ENCODE measurements at regions of chr4 and their contacts with region 1.

Region 1: GRCh38 chr4:48033825-48034413 is 17.3 kb downstream of the NIPAL1 start:
- DNase-seq: peak in 34 of 35 experiments; percentile 28 to 74 (median 53)
- ATAC-seq: peak; percentile 75 to 85 (median 82)
- H3K4me3 ChIP-seq: no peak overlapping the region
- H3K4me3 Mint-ChIP-seq: no peak overlapping the region
- H3K27ac ChIP-seq: no peak overlapping the region
- H3K27ac Mint-ChIP-seq: no peak overlapping the region
- H3K4me1 ChIP-seq: peaks cover 0 to 4% of the 10 kb centered on the region in 2 experiments
- H3K4me1 Mint-ChIP-seq: peaks cover 6 to 20% (median 12%) of the 10 kb centered on the region in 3 donors
- H3K27me3 ChIP-seq: no peaks in the 10 kb centered on the region
- H3K27me3 Mint-ChIP-seq: no peaks in the 10 kb centered on the region

Region 2: DNA sequence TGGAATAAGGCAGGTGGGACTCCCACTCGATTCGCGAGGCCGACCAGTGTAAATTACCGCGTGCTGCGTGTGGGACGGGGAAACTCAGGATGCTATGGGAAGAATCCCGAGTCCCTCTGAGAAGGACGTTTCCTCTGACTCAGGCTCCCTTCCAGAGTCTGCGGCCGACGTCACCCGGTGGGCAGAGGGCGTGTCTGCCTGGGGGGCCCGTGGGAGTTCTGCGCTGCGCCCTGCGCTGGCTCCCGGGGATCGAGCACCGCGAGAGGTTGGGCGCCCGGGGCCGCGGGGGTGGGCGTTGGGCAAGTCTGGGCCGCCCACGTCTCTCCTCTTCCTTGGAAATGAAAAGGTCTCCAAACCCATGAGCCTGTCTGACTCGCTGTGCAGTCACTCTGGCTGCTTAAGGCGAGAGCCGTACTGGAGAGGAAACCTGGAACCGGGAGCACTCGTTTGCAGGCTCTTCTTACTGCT is 16.8 kb before region 1 on chr4:
- CTCF ChIA-PET with region 1: interaction called, 8 to 18 read pairs
- POLR2A ChIA-PET with region 1: interaction called, 3 to 4 read pairs
- DNase-seq: peak in 6 of 35 experiments; percentile 2 to 28 (median 8)
- ATAC-seq: peak; percentile 4 to 25 (median 14)
- H3K4me3 ChIP-seq: peak overlapping the region; percentile 62 to 74
- H3K4me3 Mint-ChIP-seq: peak overlapping the region; percentile 83 to 85 (median 83)
- H3K27ac ChIP-seq: no peak overlapping the region
- H3K27ac Mint-ChIP-seq: no peak overlapping the region
- H3K4me1 ChIP-seq: peaks cover 7 to 20% of the 10 kb centered on the region in 2 experiments
- H3K4me1 Mint-ChIP-seq: peaks cover 10 to 15% (median 12%) of the 10 kb centered on the region in 3 donors
- H3K27me3 ChIP-seq: peaks cover 10 to 21% of the 10 kb centered on the region in 2 experiments
- H3K27me3 Mint-ChIP-seq: peaks cover 3 to 7% of the 10 kb centered on the region in 2 donors

Region 3: GRCh38 chr4:48047421-48047844 is 13.5 kb after region 1 on chr4:
- CTCF ChIA-PET with region 1: interaction called, 6 to 46 read pairs
- POLR2A ChIA-PET with region 1: interaction called, 4 read pairs
- DNase-seq: peak in 33 of 35 experiments; percentile 5 to 59 (median 26)
- ATAC-seq: peak; percentile 79 to 93 (median 91)
- H3K4me3 ChIP-seq: peak overlapping the region; percentile 9 to 29
- H3K4me3 Mint-ChIP-seq: peak overlapping the region; percentile 37 to 60 (median 55)
- H3K27ac ChIP-seq: no peak overlapping the region
- H3K27ac Mint-ChIP-seq: peak overlapping the region; percentile 13 to 25
- H3K4me1 ChIP-seq: peaks cover 23 to 31% of the 10 kb centered on the region in 2 experiments
- H3K4me1 Mint-ChIP-seq: peaks cover 47 to 61% (median 55%) of the 10 kb centered on the region in 3 donors
- H3K27me3 ChIP-seq: peaks cover 0 to 10% of the 10 kb centered on the region in 2 experiments
- H3K27me3 Mint-ChIP-seq: peaks cover 3 to 5% of the 10 kb centered on the region in 2 donors

Region 4: DNA sequence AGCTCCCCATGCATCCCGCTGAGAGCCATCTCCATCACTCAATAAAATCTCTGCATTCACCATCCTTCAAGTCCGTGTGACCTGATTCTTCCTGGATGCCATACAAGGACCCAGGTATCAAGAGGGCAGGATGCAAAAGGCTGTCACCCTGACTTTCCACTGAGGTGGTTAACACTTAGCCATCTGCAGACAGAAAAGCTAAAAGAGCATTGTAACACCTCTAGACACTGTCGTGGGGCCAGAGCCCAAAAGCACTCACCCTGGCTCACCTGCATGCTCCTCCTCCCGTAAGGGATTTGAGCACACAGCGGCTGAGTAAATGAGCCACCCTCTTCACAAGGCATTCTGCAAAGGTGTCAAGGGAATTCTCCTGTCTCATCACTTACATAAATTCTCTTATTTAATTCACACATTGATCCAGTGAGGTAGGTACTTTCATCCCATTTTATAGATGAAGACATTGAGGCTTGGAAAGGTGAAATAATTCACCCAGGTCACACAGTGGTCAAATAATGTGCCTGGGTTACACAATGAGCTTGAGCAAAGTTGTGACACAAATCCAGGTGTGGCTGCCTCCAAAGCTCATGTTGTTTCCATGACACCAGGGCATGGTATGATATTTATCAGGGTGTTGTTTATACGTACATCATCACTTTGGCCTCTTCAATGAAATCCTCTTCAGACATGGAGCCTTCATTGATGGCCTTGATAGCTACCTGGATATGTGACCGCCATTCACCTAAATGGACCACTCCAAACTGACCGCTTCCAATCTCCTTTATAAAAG is 52.1 kb after region 1 on chr4:
- CTCF ChIA-PET with region 1: interaction called, 21 to 43 read pairs
- POLR2A ChIA-PET with region 1: no interaction called
- DNase-seq: no peak
- ATAC-seq: no peak
- H3K4me3 ChIP-seq: no peak overlapping the region
- H3K4me3 Mint-ChIP-seq: no peak overlapping the region
- H3K27ac ChIP-seq: no peak overlapping the region
- H3K27ac Mint-ChIP-seq: peak overlapping the region; percentile 44 to 60
- H3K4me1 ChIP-seq: no peaks in the 10 kb centered on the region
- H3K4me1 Mint-ChIP-seq: peaks cover 11 to 15% (median 12%) of the 10 kb centered on the region in 3 donors
- H3K27me3 ChIP-seq: no peaks in the 10 kb centered on the region
- H3K27me3 Mint-ChIP-seq: no peaks in the 10 kb centered on the region

Region 5: GRCh38 chr4:48653217-48654014 is 619.5 kb after region 1 on chr4:
- CTCF ChIA-PET with region 1: no interaction called
- POLR2A ChIA-PET with region 1: no interaction called
- DNase-seq: peak in 9 of 35 experiments; percentile 3 to 20 (median 6)
- ATAC-seq: peak in 3 of 4 experiments; percentile 53 to 65 (median 54)
- H3K4me3 ChIP-seq: no peak overlapping the region
- H3K4me3 Mint-ChIP-seq: no peak overlapping the region
- H3K27ac ChIP-seq: no peak overlapping the region
- H3K27ac Mint-ChIP-seq: peak overlapping the region in 1 of 2 donors; percentile 71
- H3K4me1 ChIP-seq: peaks cover 0 to 6% of the 10 kb centered on the region in 2 experiments
- H3K4me1 Mint-ChIP-seq: peaks cover 46 to 53% (median 49%) of the 10 kb centered on the region in 3 donors
- H3K27me3 ChIP-seq: no peaks in the 10 kb centered on the region
- H3K27me3 Mint-ChIP-seq: no peaks in the 10 kb centered on the region